ENCODE measurements at regions of chr2 and their contacts with region 1.

Region 1: DNA sequence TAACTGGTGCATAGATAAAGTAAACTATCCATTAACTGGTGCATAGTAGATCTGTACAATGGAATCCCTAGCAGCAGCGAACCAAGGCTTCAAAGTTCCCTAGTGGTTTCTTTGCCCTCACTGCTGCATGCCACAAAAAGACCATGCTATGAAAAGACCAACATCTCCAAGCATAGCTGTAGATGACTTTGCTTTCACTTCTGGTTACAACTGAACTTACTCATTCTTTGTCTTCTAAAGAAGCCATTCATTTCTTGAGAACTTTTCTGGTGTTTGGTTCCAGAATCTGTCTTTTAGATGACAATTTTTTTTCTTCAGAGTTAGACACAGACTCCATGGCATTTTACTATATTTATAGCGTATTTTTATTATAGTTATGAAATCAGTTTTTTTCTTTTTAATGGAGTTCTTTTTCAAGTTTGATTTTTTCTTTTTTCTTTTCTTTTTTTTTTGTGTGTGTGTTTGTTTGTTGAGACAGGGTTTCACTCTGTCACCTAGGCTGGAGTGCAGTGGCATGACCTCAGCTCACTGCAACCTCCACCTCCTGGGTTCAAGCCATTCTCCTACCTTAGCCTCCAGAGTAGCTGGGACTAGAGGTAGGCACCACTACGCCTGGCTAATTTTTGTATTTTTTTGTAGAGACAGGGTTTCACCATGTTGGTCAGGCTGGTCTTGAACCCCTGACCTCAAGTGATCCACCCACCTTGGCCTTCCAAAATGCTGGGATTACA is 63.6 kb downstream of the SLC35F5 start:
- DNase-seq: peak; percentile 57
- H3K4me3 Mint-ChIP-seq: peak overlapping the region; percentile 6
- H3K27ac Mint-ChIP-seq: peak overlapping the region; percentile 77
- H3K4me1 Mint-ChIP-seq: peaks cover 34% of the 10 kb centered on the region
- H3K27me3 Mint-ChIP-seq: no peaks in the 10 kb centered on the region

Region 2: GRCh38 chr2:113791697-113792590 is 99.1 kb after region 1 on chr2:
- CTCF ChIA-PET with region 1: no interaction called
- intact Hi-C with region 1: loop called (anchors 1 kb)
- DNase-seq: peak; percentile 59
- H3K4me3 Mint-ChIP-seq: peak overlapping the region; percentile 26
- H3K27ac Mint-ChIP-seq: peak overlapping the region; percentile 94
- H3K4me1 Mint-ChIP-seq: peaks cover 36% of the 10 kb centered on the region
- H3K27me3 Mint-ChIP-seq: no peaks in the 10 kb centered on the region

Measured in activated naive CD4-positive, alpha-beta T cell treated with anti-CD3 and anti-CD28 coated beads for 36 hours (primary cell).